Mammary epithelial cell (primary cell): ENCODE measurements at regions of chr12 and their contacts with region 1.

Region 1: GRCh38 chr12:47307680-47308399 is 228.1 kb upstream of the AMIGO2 start:
- DNase-seq: peak; percentile 65
- H3K4me3 ChIP-seq: no peak overlapping the region
- H3K27ac ChIP-seq: no peak overlapping the region
- H3K4me1 ChIP-seq: peaks cover 17% of the 10 kb centered on the region
- H3K27me3 ChIP-seq: no peaks in the 10 kb centered on the region
- CTCF ChIP-seq: peak; percentile 67 to 76

Region 2: DNA sequence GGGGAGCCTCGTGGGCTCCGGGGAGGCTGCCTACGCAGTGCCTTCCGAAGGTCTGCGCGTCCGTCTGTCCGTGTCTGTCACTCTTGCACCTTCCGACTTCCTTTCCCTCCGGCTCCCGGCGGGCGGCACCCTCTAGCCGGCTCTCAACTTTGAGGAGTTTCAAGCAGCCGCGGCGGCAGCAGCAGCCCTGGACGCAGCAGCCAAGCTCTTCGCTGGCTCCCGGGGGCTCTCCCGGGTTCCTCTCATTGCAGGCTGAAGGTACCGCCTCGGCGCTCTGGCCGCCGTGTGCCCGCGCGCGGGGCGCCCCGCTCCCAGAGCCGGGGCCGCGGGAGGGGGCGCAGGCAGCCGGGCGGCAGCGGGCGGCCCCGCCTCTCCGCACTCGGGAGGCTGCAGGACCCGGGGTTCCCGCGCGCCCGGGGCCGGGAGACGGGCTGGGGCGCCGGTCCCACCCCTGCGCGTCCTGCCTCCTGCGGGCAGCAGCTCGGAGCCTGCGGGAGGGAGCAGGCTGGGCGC is 228.3 kb before region 1 on chr12 and contains the starts of genes AMIGO2 and PCED1B:
- CTCF ChIA-PET with region 1: interaction called, 3 read pairs
- dilution Hi-C with region 1: no loop called
- in situ Hi-C with region 1: loop called in 1 of 2 experiments (anchors 5 kb)
- intact Hi-C with region 1: loop called (anchors 1 kb)
- DNase-seq: peak; percentile 67
- H3K4me3 ChIP-seq: peak within 1 kb of the TSS; percentile 72 to 85 (median 78)
- H3K27ac ChIP-seq: peak within 1 kb of the TSS; percentile 94
- H3K4me1 ChIP-seq: peaks cover 46% of the 10 kb centered on the region
- H3K27me3 ChIP-seq: no peaks in the 10 kb centered on the region
- CTCF ChIP-seq: peak; percentile 19 to 69
- total RNA-seq, gene AMIGO2: 96.1 to 241 TPM
- total RNA-seq, gene PCED1B: 2.3 to 10.3 TPM

Region 3: DNA sequence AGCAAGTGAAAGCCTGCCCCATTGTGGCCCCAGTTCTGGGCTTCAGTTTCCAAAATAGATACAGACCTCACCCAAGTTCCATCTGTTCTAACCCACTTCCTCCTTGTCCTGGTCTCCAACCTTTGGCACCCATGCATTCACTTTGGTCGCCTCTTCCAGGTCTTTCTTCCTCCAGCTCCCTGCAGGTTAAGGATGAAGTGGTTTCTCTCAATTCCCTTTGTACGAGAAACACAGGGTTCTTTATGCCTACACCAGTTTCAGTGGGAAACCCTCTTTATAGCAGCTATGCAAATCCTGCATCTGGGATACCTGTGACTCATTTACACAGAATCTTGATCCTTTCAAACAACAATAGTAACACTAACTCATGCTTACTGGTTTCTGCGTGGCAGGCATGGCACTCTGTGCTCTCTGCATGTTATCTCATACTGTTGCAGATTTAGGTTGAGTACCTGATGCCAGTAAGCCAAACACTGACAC is 117.5 kb before region 1 on chr12:
- CTCF ChIA-PET with region 1: no interaction called
- dilution Hi-C with region 1: no loop called
- in situ Hi-C with region 1: no loop called
- intact Hi-C with region 1: loop called (anchors 10 kb)
- DNase-seq: peak; percentile 80
- H3K4me3 ChIP-seq: no peak overlapping the region
- H3K27ac ChIP-seq: no peak overlapping the region
- H3K4me1 ChIP-seq: peaks cover 21% of the 10 kb centered on the region
- H3K27me3 ChIP-seq: no peaks in the 10 kb centered on the region
- CTCF ChIP-seq: no peak

Region 4: GRCh38 chr12:47270782-47271664 is 36.8 kb before region 1 on chr12:
- CTCF ChIA-PET with region 1: no interaction called
- dilution Hi-C with region 1: no loop called
- in situ Hi-C with region 1: no loop called
- intact Hi-C with region 1: loop called (anchors 1 kb)
- DNase-seq: peak; percentile 97
- H3K4me3 ChIP-seq: no peak overlapping the region
- H3K27ac ChIP-seq: peak overlapping the region; percentile 99
- H3K4me1 ChIP-seq: peaks cover 68% of the 10 kb centered on the region
- H3K27me3 ChIP-seq: no peaks in the 10 kb centered on the region
- CTCF ChIP-seq: no peak

Region 5: DNA sequence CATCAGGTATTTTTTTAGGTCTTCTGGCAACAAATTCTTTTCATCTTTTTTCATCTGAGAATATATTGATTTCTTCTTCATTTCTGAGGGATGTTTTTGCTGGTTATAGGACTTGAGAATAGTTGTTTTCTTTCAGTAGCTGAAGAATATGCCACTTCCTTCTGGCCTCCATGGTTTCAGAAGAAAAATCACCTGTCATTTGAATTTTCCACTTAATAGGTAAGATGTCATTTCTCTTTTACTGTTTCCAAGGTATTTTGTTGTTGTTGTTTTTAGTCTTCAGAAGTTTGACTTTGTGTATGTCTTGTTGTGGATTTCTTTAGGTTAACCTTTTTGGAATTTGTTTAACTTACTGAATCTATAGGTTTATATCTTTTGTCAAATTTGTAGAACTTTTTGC is 29.7 kb after region 1 on chr12:
- CTCF ChIA-PET with region 1: no interaction called
- dilution Hi-C with region 1: no loop called
- in situ Hi-C with region 1: no loop called
- intact Hi-C with region 1: no loop called
- DNase-seq: no peak
- H3K4me3 ChIP-seq: no peak overlapping the region
- H3K27ac ChIP-seq: no peak overlapping the region
- H3K4me1 ChIP-seq: no peaks in the 10 kb centered on the region
- H3K27me3 ChIP-seq: no peaks in the 10 kb centered on the region
- CTCF ChIP-seq: no peak

Region 6: GRCh38 chr12:47442310-47442709 is 134.5 kb after region 1 on chr12:
- CTCF ChIA-PET with region 1: no interaction called
- dilution Hi-C with region 1: no loop called
- in situ Hi-C with region 1: no loop called
- intact Hi-C with region 1: no loop called
- DNase-seq: no peak
- H3K4me3 ChIP-seq: no peak overlapping the region
- H3K27ac ChIP-seq: no peak overlapping the region
- H3K4me1 ChIP-seq: no peaks in the 10 kb centered on the region
- H3K27me3 ChIP-seq: no peaks in the 10 kb centered on the region
- CTCF ChIP-seq: no peak

Region 7: DNA sequence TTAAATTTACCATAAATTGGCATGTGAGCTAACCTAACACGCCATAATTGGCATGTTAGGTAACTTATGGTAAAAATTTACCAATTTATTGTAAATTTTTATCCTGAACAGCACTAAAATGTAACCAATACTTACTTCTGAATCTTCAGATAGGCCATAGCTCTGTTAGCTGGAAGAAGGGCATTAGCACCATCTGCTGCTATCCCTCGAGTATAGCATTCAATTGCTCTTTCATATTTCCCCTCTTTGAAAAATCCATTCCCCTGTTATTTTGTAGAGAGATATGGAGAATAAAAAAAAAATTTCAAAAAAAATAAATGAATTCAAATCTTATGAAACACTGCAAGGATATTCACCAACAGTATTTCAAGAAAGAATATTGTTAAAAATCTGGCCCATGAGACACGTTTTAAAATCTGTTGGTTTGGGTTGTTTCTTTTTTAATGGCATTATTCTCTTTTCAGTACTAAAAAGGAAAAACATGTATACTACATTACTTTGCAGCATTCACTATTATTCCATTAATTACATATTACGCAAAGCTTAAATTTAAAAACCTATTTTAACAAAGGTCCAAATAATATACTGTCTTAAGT is 378.9 kb after region 1 on chr12:
- CTCF ChIA-PET with region 1: no interaction called
- dilution Hi-C with region 1: no loop called
- in situ Hi-C with region 1: no loop called
- intact Hi-C with region 1: loop called (anchors 2 kb)
- DNase-seq: peak; percentile 5
- H3K4me3 ChIP-seq: no peak overlapping the region
- H3K27ac ChIP-seq: no peak overlapping the region
- H3K4me1 ChIP-seq: no peaks in the 10 kb centered on the region
- H3K27me3 ChIP-seq: no peaks in the 10 kb centered on the region
- CTCF ChIP-seq: peak; percentile 54 to 79